Heart right ventricle (tissue), 16 donors: ENCODE measurements at regions of chr3 and their contacts with region 1.

Region 1: GRCh38 chr3:127762077-127762786 is 60.1 kb downstream of the MGLL start:
- DNase-seq: peak in 1 of 2 donors; percentile 76
- ATAC-seq: peak; percentile 68 to 89 (median 75)
- H3K4me3 ChIP-seq: peak overlapping the region in 2 of 10 donors; percentile 8 to 20
- H3K27ac ChIP-seq: peak overlapping the region; percentile 32 to 81 (median 72)
- H3K4me1 ChIP-seq: peaks cover 16 to 74% (median 56%) of the 10 kb centered on the region in 9 donors
- H3K27me3 ChIP-seq: no peaks in the 10 kb centered on the region
- CTCF ChIP-seq: no peak

Region 2: GRCh38 chr3:126321490-126321889 is 1440.7 kb before region 1 on chr3:
- intact Hi-C with region 1: no loop called
- DNase-seq: no peak
- ATAC-seq: peak in 1 of 8 donors; percentile 57
- H3K4me3 ChIP-seq: no peak overlapping the region
- H3K27ac ChIP-seq: no peak overlapping the region
- H3K4me1 ChIP-seq: no peaks in the 10 kb centered on the region
- H3K27me3 ChIP-seq: no peaks in the 10 kb centered on the region
- CTCF ChIP-seq: no peak

Region 3: DNA sequence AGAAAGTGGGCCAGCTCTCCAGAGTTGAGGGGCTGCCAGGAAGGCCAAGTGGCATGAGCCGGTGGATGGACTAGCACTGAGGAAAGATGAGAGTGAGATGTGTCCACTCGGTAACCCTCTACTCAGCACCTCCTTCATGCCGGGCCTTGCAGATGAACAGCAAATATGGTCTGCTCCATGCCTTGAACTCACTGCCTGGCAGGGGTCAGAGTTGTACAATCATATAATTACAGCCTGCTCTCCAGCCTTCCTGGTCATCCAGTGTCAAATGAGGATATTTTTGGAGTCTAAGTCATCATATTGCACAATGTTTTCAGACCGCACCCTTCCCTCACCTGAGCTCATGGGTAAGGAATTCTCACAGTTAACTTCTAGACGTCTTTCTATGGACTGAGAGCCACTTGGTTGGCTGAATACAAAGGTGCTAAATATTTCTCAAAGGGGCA is 55.2 kb after region 1 on chr3:
- intact Hi-C with region 1: loop called in 2 of 10 experiments (anchors 10 kb)
- DNase-seq: no peak
- ATAC-seq: peak; percentile 3 to 74 (median 48)
- H3K4me3 ChIP-seq: peak overlapping the region in 4 of 10 donors; percentile 0 to 66 (median 7)
- H3K27ac ChIP-seq: peak overlapping the region; percentile 18 to 98 (median 80)
- H3K4me1 ChIP-seq: peaks cover 29 to 91% (median 68%) of the 10 kb centered on the region in 9 donors
- H3K27me3 ChIP-seq: no peaks in the 10 kb centered on the region
- CTCF ChIP-seq: no peak